ENCODE measurements at regions of chr12 and their contacts with region 1.

Region 1: GRCh38 chr12:32305163-32305562 is 94.2 kb upstream of the FGD4 start:
- DNase-seq: no peak
- ATAC-seq: no peak
- H3K4me3 ChIP-seq: no peak overlapping the region
- H3K27ac ChIP-seq: no peak overlapping the region
- H3K4me1 ChIP-seq: no peaks in the 10 kb centered on the region
- H3K27me3 ChIP-seq: no peaks in the 10 kb centered on the region

Region 2: GRCh38 chr12:32062881-32063280 is 242.3 kb before region 1 on chr12:
- intact Hi-C with region 1: loop called in 1 of 2 experiments (anchors 5 kb)
- DNase-seq: no peak
- ATAC-seq: no peak
- H3K4me3 ChIP-seq: no peak overlapping the region
- H3K27ac ChIP-seq: no peak overlapping the region
- H3K4me1 ChIP-seq: no peaks in the 10 kb centered on the region
- H3K27me3 ChIP-seq: no peaks in the 10 kb centered on the region

Region 3: DNA sequence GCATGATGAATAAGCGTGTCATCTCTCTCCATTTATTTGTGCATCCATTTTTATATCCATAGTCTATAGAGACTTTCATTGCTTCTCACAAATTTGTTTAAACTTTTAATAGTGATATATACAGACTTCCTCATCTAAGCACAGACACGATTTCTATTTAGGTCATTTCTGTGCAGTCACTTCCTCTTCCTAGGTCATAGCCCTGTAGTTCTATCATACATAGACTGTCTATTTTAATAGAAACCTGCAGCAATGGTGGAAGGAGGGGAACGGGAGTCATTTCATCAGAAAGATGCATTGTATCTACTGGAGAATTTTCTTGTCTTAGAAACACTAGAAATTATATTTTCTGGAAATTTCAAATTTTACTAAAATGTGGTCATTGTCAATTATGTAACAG is 39.2 kb before region 1 on chr12:
- intact Hi-C with region 1: loop called in 1 of 2 experiments (anchors 2 kb)
- DNase-seq: no peak
- ATAC-seq: no peak
- H3K4me3 ChIP-seq: no peak overlapping the region
- H3K27ac ChIP-seq: no peak overlapping the region
- H3K4me1 ChIP-seq: no peaks in the 10 kb centered on the region
- H3K27me3 ChIP-seq: no peaks in the 10 kb centered on the region

Region 4: DNA sequence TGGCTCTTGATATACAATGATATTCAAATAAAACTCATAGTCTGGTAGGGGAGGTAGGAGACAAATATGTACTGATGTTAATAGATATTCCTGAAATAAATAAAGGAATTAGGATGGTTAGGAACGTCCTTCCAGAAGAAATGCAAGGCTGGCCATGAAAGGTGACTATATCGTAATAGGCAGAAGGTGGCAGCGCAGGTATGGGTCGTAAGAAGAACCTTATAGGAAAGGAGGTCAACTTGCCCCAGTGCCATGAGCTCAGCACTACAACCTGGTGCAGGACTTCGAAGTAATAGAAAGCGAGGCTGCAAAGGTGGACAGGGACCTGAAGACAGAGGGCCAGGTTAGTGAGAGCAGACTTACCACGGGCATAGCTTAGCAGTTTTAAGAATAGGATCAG is 38.9 kb after region 1 on chr12:
- intact Hi-C with region 1: no loop called
- DNase-seq: no peak
- ATAC-seq: no peak
- H3K4me3 ChIP-seq: no peak overlapping the region
- H3K27ac ChIP-seq: no peak overlapping the region
- H3K4me1 ChIP-seq: no peaks in the 10 kb centered on the region
- H3K27me3 ChIP-seq: no peaks in the 10 kb centered on the region

Measured in aorta (tissue), 5 donors.